B cell (primary cell): ENCODE measurements at regions of chr17 and their contacts with region 1.

Region 1: GRCh38 chr17:74528491-74529199 is 2.6 kb downstream of the CD300LB start:
- DNase-seq: peak; percentile 83
- ATAC-seq: peak; percentile 84
- H3K4me3 ChIP-seq: no peak overlapping the region
- H3K4me3 Mint-ChIP-seq: no peak overlapping the region
- H3K27ac ChIP-seq: no peak overlapping the region
- H3K27ac Mint-ChIP-seq: peak overlapping the region; percentile 11
- H3K4me1 ChIP-seq: peaks cover 28 to 39% of the 10 kb centered on the region in 2 donors
- H3K4me1 Mint-ChIP-seq: peaks cover 29% of the 10 kb centered on the region
- H3K27me3 ChIP-seq: peaks cover 0 to 15% (median 0%) of the 10 kb centered on the region in 4 experiments
- H3K27me3 Mint-ChIP-seq: peaks cover 11% of the 10 kb centered on the region
- CTCF ChIP-seq: no peak

Region 2: DNA sequence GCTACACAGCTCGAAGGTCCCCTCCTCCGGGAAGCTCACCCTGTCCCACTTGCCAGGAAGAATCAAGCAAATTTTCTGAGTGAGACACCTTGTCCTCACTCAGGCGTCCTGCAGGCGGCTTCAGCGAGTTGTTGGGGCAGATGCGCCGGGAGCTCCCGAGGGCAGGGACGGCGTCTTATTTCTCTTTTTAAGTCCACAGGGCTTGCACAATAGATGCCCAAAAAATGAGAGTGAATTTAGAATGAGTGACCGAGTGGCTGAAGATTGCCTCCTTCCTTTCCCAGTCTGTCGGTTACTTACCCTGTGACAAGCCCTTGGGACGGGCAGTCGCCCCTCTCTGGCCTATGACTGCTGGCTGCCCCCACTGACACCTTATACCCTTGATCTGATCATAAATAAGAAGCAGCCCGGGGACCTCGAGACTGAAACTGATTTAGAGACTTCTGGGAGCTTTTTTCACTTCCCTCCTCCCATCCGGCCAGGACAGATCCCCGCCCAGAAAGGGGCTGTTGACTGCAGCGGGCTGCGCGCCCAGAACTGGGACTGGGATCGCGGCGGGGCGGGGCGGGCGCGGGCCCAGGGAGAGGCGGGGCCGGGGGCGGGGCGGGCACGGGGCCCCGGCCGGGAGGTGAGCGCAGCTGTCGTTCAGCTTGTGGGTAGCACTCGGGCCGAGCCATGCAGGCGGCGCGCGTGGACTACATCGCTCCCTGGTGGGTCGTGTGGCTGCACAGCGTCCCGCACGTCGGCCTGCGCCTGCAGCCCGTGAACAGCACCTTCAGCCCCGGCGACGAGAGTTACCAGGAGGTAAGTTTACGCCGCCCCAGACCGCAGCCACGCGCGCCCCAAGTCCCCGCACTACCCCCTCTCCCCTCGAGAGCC is 315.5 kb before region 1 on chr17 and contains the start of gene TTYH2:
- CTCF ChIA-PET with region 1: interaction called, 3 read pairs
- POLR2A ChIA-PET with region 1: no interaction called
- intact Hi-C with region 1: loop called (anchors 1 kb)
- DNase-seq: peak; percentile 84
- ATAC-seq: peak; percentile 77
- H3K4me3 ChIP-seq: peak within 1 kb of the TSS; percentile 23 to 73 (median 55)
- H3K4me3 Mint-ChIP-seq: peak within 1 kb of the TSS; percentile 81
- H3K27ac ChIP-seq: peak within 1 kb of the TSS; percentile 27 to 55
- H3K27ac Mint-ChIP-seq: peak within 1 kb of the TSS; percentile 89
- H3K4me1 ChIP-seq: peaks cover 35 to 44% of the 10 kb centered on the region in 2 donors
- H3K4me1 Mint-ChIP-seq: peaks cover 50% of the 10 kb centered on the region
- H3K27me3 ChIP-seq: no peaks in the 10 kb centered on the region
- H3K27me3 Mint-ChIP-seq: no peaks in the 10 kb centered on the region
- CTCF ChIP-seq: peak; percentile 32
- total RNA-seq, gene TTYH2: 3.1 and 3.8 TPM in 2 replicates

Region 3: DNA sequence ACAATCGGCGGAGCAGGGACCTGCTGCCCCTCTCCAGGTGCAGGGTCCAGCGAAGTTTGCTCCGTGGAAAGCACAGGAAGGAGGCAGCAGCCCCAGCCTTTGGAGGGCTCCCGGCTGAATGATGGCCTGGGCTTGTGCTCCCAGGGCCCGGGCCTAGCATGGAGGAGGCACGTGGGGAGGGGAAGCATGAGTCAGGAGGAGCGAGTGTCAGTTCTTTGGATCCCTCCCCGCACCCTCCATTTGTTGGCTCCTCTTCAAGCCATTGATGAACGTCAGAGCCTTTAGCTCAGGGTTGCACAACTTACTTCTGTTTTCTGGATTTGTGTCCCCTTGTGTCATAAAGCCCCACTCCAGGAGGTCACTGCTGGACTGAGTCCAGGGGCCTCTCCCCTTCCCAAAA is 289.5 kb before region 1 on chr17:
- CTCF ChIA-PET with region 1: no interaction called
- POLR2A ChIA-PET with region 1: no interaction called
- intact Hi-C with region 1: no loop called
- DNase-seq: no peak
- ATAC-seq: no peak
- H3K4me3 ChIP-seq: no peak overlapping the region
- H3K4me3 Mint-ChIP-seq: no peak overlapping the region
- H3K27ac ChIP-seq: no peak overlapping the region
- H3K27ac Mint-ChIP-seq: no peak overlapping the region
- H3K4me1 ChIP-seq: peaks cover 8 to 12% of the 10 kb centered on the region in 2 donors
- H3K4me1 Mint-ChIP-seq: peaks cover 10% of the 10 kb centered on the region
- H3K27me3 ChIP-seq: no peaks in the 10 kb centered on the region
- H3K27me3 Mint-ChIP-seq: no peaks in the 10 kb centered on the region
- CTCF ChIP-seq: no peak

Region 4: GRCh38 chr17:74379495-74380085 is 149.1 kb before region 1 on chr17:
- CTCF ChIA-PET with region 1: interaction called, 27 read pairs
- POLR2A ChIA-PET with region 1: no interaction called
- intact Hi-C with region 1: no loop called
- DNase-seq: peak; percentile 83
- ATAC-seq: peak; percentile 73
- H3K4me3 ChIP-seq: no peak overlapping the region
- H3K4me3 Mint-ChIP-seq: no peak overlapping the region
- H3K27ac ChIP-seq: no peak overlapping the region
- H3K27ac Mint-ChIP-seq: no peak overlapping the region
- H3K4me1 ChIP-seq: peaks cover 5 to 9% of the 10 kb centered on the region in 2 donors
- H3K4me1 Mint-ChIP-seq: no peaks in the 10 kb centered on the region
- H3K27me3 ChIP-seq: peaks cover 0 to 15% (median 3%) of the 10 kb centered on the region in 4 experiments
- H3K27me3 Mint-ChIP-seq: peaks cover 19% of the 10 kb centered on the region
- CTCF ChIP-seq: peak; percentile 76

Region 5: DNA sequence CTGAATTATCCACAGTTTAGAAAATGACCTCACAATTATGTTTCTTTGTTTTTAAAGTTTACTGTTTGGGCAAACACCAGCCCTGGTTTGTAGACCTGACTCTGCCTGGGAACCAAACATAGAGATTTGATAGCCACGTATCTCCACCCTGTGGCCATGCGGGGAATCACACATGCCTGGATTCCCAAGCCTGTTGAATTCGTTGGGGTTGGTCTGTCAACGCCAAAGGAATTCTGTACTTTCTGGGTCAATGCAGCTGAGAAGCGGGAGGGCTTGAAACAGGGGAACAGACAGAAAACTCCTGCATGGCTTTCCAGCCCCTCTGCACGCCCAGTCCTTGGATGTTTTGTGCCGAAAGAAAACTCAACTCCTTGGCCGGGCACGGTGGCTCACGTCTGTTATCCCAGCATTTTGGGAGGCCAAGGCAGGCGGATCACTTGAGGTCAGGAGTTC is 35.2 kb before region 1 on chr17:
- CTCF ChIA-PET with region 1: no interaction called
- POLR2A ChIA-PET with region 1: interaction called, 5 read pairs
- intact Hi-C with region 1: loop called (anchors 1 kb)
- DNase-seq: peak; percentile 68
- ATAC-seq: peak; percentile 80
- H3K4me3 ChIP-seq: no peak overlapping the region
- H3K4me3 Mint-ChIP-seq: no peak overlapping the region
- H3K27ac ChIP-seq: no peak overlapping the region
- H3K27ac Mint-ChIP-seq: no peak overlapping the region
- H3K4me1 ChIP-seq: no peaks in the 10 kb centered on the region
- H3K4me1 Mint-ChIP-seq: no peaks in the 10 kb centered on the region
- H3K27me3 ChIP-seq: no peaks in the 10 kb centered on the region
- H3K27me3 Mint-ChIP-seq: peaks cover 10% of the 10 kb centered on the region
- CTCF ChIP-seq: peak; percentile 90

Region 6: GRCh38 chr17:74646231-74646630 is 117.6 kb after region 1 on chr17:
- CTCF ChIA-PET with region 1: interaction called, 6 read pairs
- POLR2A ChIA-PET with region 1: no interaction called
- intact Hi-C with region 1: loop called (anchors 1 kb)
- DNase-seq: peak; percentile 60
- ATAC-seq: peak; percentile 50
- H3K4me3 ChIP-seq: no peak overlapping the region
- H3K4me3 Mint-ChIP-seq: no peak overlapping the region
- H3K27ac ChIP-seq: no peak overlapping the region
- H3K27ac Mint-ChIP-seq: peak overlapping the region; percentile 50
- H3K4me1 ChIP-seq: peaks cover 32 to 37% of the 10 kb centered on the region in 2 donors
- H3K4me1 Mint-ChIP-seq: peaks cover 43% of the 10 kb centered on the region
- H3K27me3 ChIP-seq: peaks cover 0 to 32% (median 12%) of the 10 kb centered on the region in 4 experiments
- H3K27me3 Mint-ChIP-seq: peaks cover 47% of the 10 kb centered on the region
- CTCF ChIP-seq: peak; percentile 56